Heart left ventricle (tissue), 16 donors: ENCODE measurements at regions of chr3 and their contacts with region 1.

Region 1: GRCh38 chr3:11643605-11644087 is at the start of gene VGLL4:
- DNase-seq: peak; percentile 89 to 95 (median 94)
- ATAC-seq: peak; percentile 89 to 92 (median 91)
- H3K4me3 ChIP-seq: peak within 1 kb of the TSS; percentile 47 to 82 (median 73)
- H3K27ac ChIP-seq: peak within 1 kb of the TSS; percentile 74 to 97 (median 94)
- H3K4me1 ChIP-seq: peaks cover 9 to 37% (median 31%) of the 10 kb centered on the region in 12 donors
- H3K27me3 ChIP-seq: no peaks in the 10 kb centered on the region
- CTCF ChIP-seq: peak in 2 of 12 donors; percentile 36 to 42
- POLR2A ChIP-seq: peak in 1 of 2 donors; percentile 73
- total RNA-seq, gene VGLL4: 24.0 to 40.4 (median 32.6) TPM

Region 2: GRCh38 chr3:11465744-11466616 is 177.7 kb before region 1 on chr3:
- intact Hi-C with region 1: loop called in 3 of 10 experiments (anchors 5 to 10 kb)
- DNase-seq: peak in 4 of 5 donors; percentile 45 to 70 (median 61)
- ATAC-seq: peak; percentile 91 to 94 (median 93)
- H3K4me3 ChIP-seq: no peak overlapping the region
- H3K27ac ChIP-seq: peak overlapping the region; percentile 73 to 94 (median 84)
- H3K4me1 ChIP-seq: peaks cover 0 to 36% (median 21%) of the 10 kb centered on the region in 12 donors
- H3K27me3 ChIP-seq: no peaks in the 10 kb centered on the region
- CTCF ChIP-seq: no peak
- POLR2A ChIP-seq: no peak

Region 3: DNA sequence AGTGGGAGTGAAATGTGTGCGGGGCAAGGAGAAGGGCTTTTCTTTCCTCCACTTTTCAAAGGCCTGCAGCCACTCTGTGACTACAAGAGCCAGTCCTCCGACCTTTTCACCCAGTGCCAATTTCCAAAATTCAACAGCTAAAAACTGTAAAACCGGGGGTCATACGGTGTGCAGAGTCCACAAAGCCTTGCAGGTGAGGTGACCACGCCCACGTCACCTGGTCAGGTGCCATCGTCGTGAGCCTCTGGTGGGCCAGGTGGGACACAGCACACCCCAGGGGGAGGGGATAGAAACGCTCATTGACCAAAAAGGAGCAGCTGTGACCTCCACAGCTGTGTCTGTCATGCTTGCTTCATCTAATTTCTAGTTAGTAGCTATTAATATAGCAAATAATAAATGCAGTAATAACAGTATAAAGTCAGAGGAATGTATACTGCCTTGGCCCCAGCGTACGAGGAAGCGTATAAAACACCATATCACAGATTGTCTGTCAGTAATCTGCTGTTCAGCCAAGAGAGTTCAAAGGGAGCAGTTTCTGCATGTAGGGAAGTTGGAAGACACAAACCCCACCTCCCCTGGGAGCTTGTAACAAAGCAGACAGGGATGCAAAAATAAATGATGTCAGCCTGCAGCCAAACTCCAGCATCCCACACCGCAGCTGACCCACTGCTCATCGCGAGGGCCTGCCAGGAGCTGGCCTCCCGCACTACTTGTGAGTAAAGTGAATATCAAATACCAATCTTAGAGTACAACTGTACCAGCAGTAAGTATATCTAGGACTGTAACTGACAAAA is 86.6 kb before region 1 on chr3:
- intact Hi-C with region 1: loop called in 2 of 10 experiments (anchors 5 to 10 kb)
- DNase-seq: peak; percentile 62 to 78 (median 73)
- ATAC-seq: peak in 2 of 4 donors; percentile 28 to 29
- H3K4me3 ChIP-seq: no peak overlapping the region
- H3K27ac ChIP-seq: peak overlapping the region in 11 of 12 donors; percentile 20 to 78 (median 54)
- H3K4me1 ChIP-seq: peaks cover 15 to 91% (median 73%) of the 10 kb centered on the region in 12 donors
- H3K27me3 ChIP-seq: no peaks in the 10 kb centered on the region
- CTCF ChIP-seq: no peak
- POLR2A ChIP-seq: no peak

Region 4: GRCh38 chr3:11582191-11582968 is 61.3 kb before region 1 on chr3:
- intact Hi-C with region 1: loop called in 5 of 10 experiments (anchors 1 to 10 kb)
- DNase-seq: peak in 4 of 5 donors; percentile 77 to 82 (median 81)
- ATAC-seq: peak; percentile 78 to 88 (median 85)
- H3K4me3 ChIP-seq: peak overlapping the region in 11 of 12 donors; percentile 3 to 59 (median 41)
- H3K27ac ChIP-seq: peak overlapping the region in 11 of 12 donors; percentile 49 to 80 (median 74)
- H3K4me1 ChIP-seq: peaks cover 17 to 80% (median 50%) of the 10 kb centered on the region in 12 donors
- H3K27me3 ChIP-seq: no peaks in the 10 kb centered on the region
- CTCF ChIP-seq: no peak
- POLR2A ChIP-seq: no peak

Region 5: DNA sequence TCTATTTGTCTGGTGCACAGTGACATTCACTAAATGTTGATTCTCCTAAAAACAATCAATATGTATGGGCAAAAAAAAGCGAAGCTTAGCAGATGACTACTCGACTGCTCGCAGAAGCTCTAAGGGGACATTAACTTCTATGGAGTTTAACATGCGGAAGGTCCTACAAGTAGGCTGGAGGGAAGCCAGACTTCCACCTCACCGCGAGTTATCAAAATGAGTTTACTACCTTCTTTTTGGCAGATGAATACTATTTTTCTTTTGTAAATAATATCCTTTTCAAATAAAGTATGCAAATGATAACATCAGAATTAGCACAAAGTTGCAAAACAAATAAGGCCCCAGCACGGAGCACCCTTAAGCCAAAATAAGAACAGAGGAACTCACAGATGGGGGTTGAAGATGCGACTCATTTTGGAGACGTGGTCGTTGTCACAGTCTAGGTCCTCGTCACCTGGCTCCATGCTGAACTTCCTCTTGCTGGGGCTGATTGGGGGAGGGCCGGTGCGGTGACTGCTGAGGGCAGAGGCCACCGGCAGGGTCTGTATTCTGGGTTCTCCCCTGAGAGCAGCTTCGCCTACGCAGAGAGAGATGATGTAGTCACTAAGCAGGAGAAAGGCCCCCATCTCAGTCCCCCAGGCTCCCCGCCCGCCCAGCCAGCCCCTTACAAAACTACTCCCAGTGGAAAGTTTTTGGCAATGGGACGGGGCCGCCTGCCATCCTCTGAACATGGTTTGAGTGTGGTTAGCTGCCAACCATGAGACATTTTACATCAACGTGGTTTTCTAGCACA is 42.0 kb before region 1 on chr3:
- intact Hi-C with region 1: loop called in 5 of 10 experiments (anchors 2 to 5 kb)
- DNase-seq: peak in 4 of 5 donors; percentile 68 to 73 (median 71)
- ATAC-seq: peak in 3 of 4 donors; percentile 47 to 59 (median 47)
- H3K4me3 ChIP-seq: peak overlapping the region in 1 of 12 donors; percentile 2
- H3K27ac ChIP-seq: peak overlapping the region in 11 of 12 donors; percentile 72 to 94 (median 81)
- H3K4me1 ChIP-seq: peaks cover 1 to 87% (median 64%) of the 10 kb centered on the region in 12 donors
- H3K27me3 ChIP-seq: no peaks in the 10 kb centered on the region
- CTCF ChIP-seq: no peak
- POLR2A ChIP-seq: no peak